Activated CD4-positive, alpha-beta memory T cell treated with anti-CD3 and anti-CD28 coated beads for 36 hours (primary cell): ENCODE measurements at regions of chr1 and their contacts with region 1.

Region 1: GRCh38 chr1:89780721-89781120 is 40.1 kb upstream of the LRRC8D start:
- DNase-seq: peak; percentile 58
- H3K4me3 Mint-ChIP-seq: peak overlapping the region; percentile 48
- H3K27ac Mint-ChIP-seq: peak overlapping the region; percentile 90
- H3K4me1 Mint-ChIP-seq: peaks cover 43% of the 10 kb centered on the region
- H3K27me3 Mint-ChIP-seq: no peaks in the 10 kb centered on the region

Region 2: DNA sequence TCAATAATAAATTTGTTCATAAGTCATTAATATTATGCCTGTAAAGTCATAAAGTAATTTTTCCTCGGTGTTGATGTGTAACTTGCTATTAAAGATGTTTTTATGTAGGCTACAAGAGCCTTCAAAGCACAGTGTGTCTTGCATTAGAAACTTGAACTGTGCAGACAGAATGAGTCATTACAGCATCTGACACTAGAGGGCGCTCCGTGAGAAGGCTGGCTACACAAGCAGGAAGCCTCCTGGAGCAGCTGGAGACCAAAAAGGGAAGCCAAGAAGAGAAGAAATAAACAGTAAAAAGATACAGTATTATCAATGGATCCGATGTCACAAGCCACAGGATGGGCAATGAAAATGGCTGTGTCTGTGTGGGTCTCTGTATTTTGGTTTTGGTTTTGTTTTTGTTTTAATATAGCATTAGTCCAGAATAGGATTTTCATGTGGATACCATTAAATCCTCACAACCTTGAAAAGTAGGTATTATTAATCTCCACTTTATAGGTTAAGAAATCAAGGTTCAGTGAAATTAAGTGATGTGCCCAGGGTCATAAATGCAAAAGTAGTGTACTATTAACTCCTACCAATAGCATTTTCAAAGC is 24.0 kb after region 1 on chr1:
- CTCF ChIA-PET with region 1: interaction called, 8 read pairs
- POLR2A ChIA-PET with region 1: no interaction called
- intact Hi-C with region 1: loop called (anchors 1 kb)
- DNase-seq: peak; percentile 90
- H3K4me3 Mint-ChIP-seq: no peak overlapping the region
- H3K27ac Mint-ChIP-seq: no peak overlapping the region
- H3K4me1 Mint-ChIP-seq: no peaks in the 10 kb centered on the region
- H3K27me3 Mint-ChIP-seq: no peaks in the 10 kb centered on the region

Region 3: GRCh38 chr1:89820422-89821321 is 40.0 kb after region 1 on chr1 and contains the start of gene LRRC8D:
- CTCF ChIA-PET with region 1: no interaction called
- POLR2A ChIA-PET with region 1: no interaction called
- intact Hi-C with region 1: no loop called
- DNase-seq: peak; percentile 86
- H3K4me3 Mint-ChIP-seq: peak within 1 kb of the TSS; percentile 85
- H3K27ac Mint-ChIP-seq: peak within 1 kb of the TSS; percentile 55
- H3K4me1 Mint-ChIP-seq: peaks cover 26% of the 10 kb centered on the region
- H3K27me3 Mint-ChIP-seq: no peaks in the 10 kb centered on the region
- total RNA-seq, gene LRRC8D: 17.7 to 19.4 TPM

Region 4: GRCh38 chr1:89855413-89856123 is 74.8 kb after region 1 on chr1:
- CTCF ChIA-PET with region 1: interaction called, 3 read pairs
- POLR2A ChIA-PET with region 1: no interaction called
- intact Hi-C with region 1: loop called (anchors 1 kb)
- DNase-seq: no peak
- H3K4me3 Mint-ChIP-seq: no peak overlapping the region
- H3K27ac Mint-ChIP-seq: no peak overlapping the region
- H3K4me1 Mint-ChIP-seq: peaks cover 18% of the 10 kb centered on the region
- H3K27me3 Mint-ChIP-seq: no peaks in the 10 kb centered on the region

Region 5: DNA sequence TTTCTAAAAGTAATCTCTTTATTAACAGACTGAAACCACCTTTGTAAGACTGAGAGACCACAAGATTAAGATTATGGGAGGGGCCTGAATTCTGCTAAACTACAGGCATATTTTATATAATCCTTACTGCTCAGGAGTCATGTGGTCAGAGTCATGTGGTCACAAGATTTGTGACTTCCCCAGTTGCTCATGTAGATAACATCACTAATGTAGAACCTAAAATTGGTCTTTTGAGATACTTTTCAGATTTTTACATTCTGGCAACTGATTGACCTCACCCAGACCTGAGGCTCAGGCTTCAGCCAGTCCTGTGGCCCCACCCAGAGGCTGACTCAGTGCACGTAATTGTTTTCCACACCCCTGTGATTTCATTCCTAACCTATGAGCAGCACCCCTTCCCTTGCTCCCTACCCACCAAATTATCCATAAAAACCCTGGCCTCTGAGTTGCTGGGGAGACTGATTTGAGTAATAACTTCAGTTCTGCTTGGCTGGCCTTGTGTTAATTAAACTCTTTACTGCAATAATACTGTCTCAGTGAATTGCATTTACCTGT is 172.4 kb after region 1 on chr1:
- CTCF ChIA-PET with region 1: no interaction called
- POLR2A ChIA-PET with region 1: no interaction called
- intact Hi-C with region 1: loop called (anchors 1 kb)
- DNase-seq: peak; percentile 61
- H3K4me3 Mint-ChIP-seq: no peak overlapping the region
- H3K27ac Mint-ChIP-seq: no peak overlapping the region
- H3K4me1 Mint-ChIP-seq: peaks cover 14% of the 10 kb centered on the region
- H3K27me3 Mint-ChIP-seq: no peaks in the 10 kb centered on the region

Region 6: DNA sequence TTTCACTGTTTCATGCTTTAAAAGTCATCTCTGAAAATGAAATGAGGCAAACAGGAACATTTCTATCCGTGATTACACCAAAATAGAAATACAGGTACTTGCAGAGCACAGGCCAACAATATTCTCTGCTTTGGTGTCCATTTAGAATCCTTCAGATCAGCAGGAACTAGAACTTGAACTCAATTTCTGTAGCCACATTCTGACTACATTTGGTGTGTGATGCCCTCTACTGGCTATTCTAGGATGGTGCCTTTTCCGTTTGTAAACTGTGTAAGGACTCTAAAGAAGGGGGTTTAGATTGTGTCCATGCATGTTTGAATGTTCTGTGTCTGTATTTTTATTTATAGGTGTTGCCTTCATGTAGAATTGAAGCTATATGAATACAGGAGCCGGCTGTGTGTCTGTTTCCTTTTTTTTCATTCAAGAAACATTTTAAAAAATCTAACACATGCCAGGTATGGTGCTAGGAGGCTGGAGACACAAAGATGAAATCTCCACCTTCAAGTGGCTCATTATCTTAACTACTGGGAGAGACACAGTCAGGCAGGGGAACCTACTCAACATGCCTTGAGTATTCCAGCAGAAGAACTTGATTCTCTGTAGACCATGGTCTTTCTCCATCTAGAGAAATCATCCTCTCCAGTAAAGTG is 206.6 kb after region 1 on chr1:
- CTCF ChIA-PET with region 1: interaction called, 17 read pairs
- POLR2A ChIA-PET with region 1: no interaction called
- intact Hi-C with region 1: loop called (anchors 1 kb)
- DNase-seq: peak; percentile 50
- H3K4me3 Mint-ChIP-seq: no peak overlapping the region
- H3K27ac Mint-ChIP-seq: no peak overlapping the region
- H3K4me1 Mint-ChIP-seq: no peaks in the 10 kb centered on the region
- H3K27me3 Mint-ChIP-seq: no peaks in the 10 kb centered on the region

Region 7: DNA sequence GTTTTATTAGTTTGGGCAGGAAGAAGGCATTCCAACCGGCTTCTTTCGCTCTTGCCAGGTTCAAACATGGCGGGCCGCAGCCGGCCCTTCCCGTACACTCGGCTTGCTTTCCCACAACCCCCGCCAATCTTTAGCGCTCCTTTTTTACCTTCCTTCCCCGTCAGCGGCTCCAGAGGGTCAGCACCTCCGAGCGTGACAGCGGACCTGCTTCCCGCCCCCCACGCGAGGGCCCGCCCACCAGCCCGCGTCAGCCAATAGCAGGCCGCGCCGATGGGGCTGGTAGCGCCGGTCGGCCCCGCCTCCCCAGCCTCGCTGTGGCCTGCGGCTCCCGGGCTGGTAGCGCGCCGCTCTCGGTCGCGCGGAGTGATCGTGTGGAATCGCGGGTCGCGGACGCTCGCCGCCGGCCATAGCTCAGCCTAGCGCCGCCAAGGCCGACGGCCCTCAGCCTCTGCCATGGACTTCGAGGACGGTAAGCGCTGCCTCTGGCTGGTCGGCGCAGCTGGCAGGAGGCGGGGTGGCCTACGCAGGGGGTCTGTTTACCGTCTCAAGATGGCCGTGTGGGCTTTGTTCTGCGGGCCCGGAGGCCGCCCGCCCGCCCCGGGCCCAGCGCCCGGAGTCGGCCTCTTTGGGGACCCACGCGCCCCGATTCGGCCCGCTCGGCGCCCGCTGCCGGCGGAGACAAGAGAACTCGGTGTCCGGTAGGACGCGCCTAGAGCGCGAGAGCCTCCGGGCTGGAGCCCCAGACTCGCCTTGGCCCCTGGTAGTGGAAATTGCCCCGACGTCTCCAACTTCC is 214.3 kb after region 1 on chr1 and contains the start of gene ZNF326:
- CTCF ChIA-PET with region 1: interaction called, 3 read pairs
- POLR2A ChIA-PET with region 1: interaction called, 3 read pairs
- intact Hi-C with region 1: loop called (anchors 2 kb)
- DNase-seq: peak; percentile 96
- H3K4me3 Mint-ChIP-seq: peak within 1 kb of the TSS; percentile 99
- H3K27ac Mint-ChIP-seq: peak within 1 kb of the TSS; percentile 89
- H3K4me1 Mint-ChIP-seq: peaks cover 39% of the 10 kb centered on the region
- H3K27me3 Mint-ChIP-seq: no peaks in the 10 kb centered on the region
- total RNA-seq, gene ZNF326: 17.2 to 17.3 TPM